ENCODE measurements at regions of chr2 and their contacts with region 1.

Region 1: DNA sequence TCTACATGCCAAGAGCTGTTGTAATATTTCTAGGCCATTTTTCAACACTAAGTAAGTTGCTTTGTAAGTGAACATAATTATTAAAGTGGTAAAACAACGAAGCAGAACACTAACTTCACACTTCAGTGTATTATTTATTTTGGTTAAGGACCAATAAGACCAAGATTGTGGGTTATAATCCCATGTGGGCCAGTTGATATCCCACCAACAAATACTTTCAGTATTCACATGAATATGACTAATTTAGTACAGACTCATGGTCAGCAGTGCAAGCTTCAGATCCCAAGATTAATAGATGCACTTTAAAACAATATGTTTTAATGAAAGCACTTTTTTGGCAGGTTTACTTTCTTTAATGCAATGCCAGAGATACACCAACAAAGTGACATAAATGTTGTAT is 154.3 kb downstream of the LCLAT1 start:
- DNase-seq: no peak
- ATAC-seq: no peak
- H3K4me3 ChIP-seq: no peak overlapping the region
- H3K27ac ChIP-seq: no peak overlapping the region
- H3K4me1 ChIP-seq: no peaks in the 10 kb centered on the region
- H3K27me3 ChIP-seq: no peaks in the 10 kb centered on the region
- CTCF ChIP-seq: no peak
- EP300 ChIP-seq: no peak
- POLR2A ChIP-seq: no peak
- RAD21 ChIP-seq: no peak

Region 2: DNA sequence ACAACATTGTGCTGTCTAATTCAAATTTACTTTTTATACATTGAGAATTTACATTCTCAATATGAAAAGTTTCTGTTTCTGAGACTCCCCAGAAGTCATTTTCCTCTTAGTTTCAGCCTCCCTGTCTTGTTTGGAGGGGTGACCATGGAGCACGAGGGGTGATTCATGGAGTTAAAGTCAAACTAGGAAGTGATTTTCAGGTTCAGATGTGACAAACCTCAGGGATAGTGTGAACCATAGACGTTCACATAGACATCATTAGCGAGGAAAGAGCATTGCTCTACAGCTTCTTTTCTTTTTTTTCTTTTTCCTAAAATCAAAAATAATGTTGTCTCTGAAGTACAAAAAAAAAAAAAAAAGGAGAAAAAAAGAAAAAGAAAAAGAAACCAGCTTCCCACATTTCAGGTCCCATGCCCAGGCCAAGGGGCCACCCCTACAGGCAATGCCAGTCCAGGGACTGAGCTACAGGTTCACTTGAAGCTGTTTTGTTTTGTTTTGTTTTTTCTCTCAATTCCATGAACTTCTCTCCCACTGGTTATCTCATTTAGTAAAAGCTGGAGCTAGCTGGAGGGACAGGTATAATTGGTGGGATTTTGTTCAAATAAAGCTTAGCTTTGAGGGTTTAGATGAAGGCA is 172.4 kb before region 1 on chr2:
- CTCF ChIA-PET with region 1: no interaction called
- POLR2A ChIA-PET with region 1: no interaction called
- RAD21 ChIA-PET with region 1: no interaction called
- SMC1A ChIA-PET with region 1: no interaction called
- in situ Hi-C with region 1: no loop called
- intact Hi-C with region 1: no loop called
- DNase-seq: no peak
- ATAC-seq: no peak
- H3K4me3 ChIP-seq: no peak overlapping the region
- H3K27ac ChIP-seq: no peak overlapping the region
- H3K4me1 ChIP-seq: no peaks in the 10 kb centered on the region
- H3K27me3 ChIP-seq: no peaks in the 10 kb centered on the region
- CTCF ChIP-seq: no peak
- EP300 ChIP-seq: no peak
- POLR2A ChIP-seq: no peak
- RAD21 ChIP-seq: no peak

Region 3: DNA sequence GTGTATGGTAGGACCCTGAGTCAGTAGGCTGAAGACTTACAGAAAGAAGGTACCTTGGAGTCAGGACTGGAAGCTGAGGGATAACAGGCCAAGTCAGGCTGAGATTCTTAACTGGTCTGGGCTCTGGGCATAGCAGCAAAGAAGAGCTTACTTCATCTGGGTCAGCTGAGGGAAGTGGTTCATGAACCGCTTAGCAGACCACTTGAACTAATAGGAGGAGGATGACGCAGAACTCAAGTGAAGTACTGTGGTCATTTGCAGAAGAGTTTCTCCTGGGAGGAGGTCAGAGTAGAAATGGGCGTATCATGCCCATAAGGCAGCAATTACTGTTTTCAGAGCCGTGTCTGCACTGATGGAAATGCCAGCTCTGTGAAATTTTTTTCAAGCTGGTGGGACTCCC is 10.2 kb after region 1 on chr2:
- CTCF ChIA-PET with region 1: no interaction called
- POLR2A ChIA-PET with region 1: no interaction called
- RAD21 ChIA-PET with region 1: interaction called, 4 read pairs
- SMC1A ChIA-PET with region 1: interaction called, 17 read pairs
- in situ Hi-C with region 1: no loop called
- intact Hi-C with region 1: no loop called
- DNase-seq: no peak
- ATAC-seq: no peak
- H3K4me3 ChIP-seq: no peak overlapping the region
- H3K27ac ChIP-seq: no peak overlapping the region
- H3K4me1 ChIP-seq: peaks cover 9% of the 10 kb centered on the region
- H3K27me3 ChIP-seq: no peaks in the 10 kb centered on the region
- CTCF ChIP-seq: no peak
- EP300 ChIP-seq: no peak
- POLR2A ChIP-seq: no peak
- RAD21 ChIP-seq: no peak

Region 4: DNA sequence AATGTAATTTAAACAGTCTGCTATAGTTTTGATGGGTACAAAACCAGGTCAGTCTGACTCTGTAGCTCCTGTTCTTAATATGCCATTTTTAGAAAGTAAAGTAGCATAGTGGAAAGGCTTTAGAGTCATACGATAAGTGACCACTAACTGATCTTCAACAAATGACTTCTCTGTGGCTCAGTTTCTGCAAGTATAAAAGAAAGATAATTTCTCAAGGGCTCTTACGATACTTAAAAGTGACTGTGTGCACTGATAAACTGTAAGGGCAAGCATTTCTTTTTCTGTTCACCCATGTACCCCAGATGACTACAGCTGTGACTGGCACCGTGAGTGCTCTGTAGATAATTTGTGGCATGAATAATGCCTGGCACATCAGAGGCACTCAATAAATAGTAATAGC is 24.3 kb after region 1 on chr2:
- CTCF ChIA-PET with region 1: no interaction called
- POLR2A ChIA-PET with region 1: interaction called, 3 read pairs
- RAD21 ChIA-PET with region 1: no interaction called
- SMC1A ChIA-PET with region 1: interaction called, 10 read pairs
- in situ Hi-C with region 1: no loop called
- intact Hi-C with region 1: no loop called
- DNase-seq: no peak
- ATAC-seq: peak; percentile 39
- H3K4me3 ChIP-seq: no peak overlapping the region
- H3K27ac ChIP-seq: peak overlapping the region; percentile 87
- H3K4me1 ChIP-seq: peaks cover 25% of the 10 kb centered on the region
- H3K27me3 ChIP-seq: no peaks in the 10 kb centered on the region
- CTCF ChIP-seq: no peak
- EP300 ChIP-seq: no peak
- POLR2A ChIP-seq: no peak
- RAD21 ChIP-seq: no peak

Region 5: DNA sequence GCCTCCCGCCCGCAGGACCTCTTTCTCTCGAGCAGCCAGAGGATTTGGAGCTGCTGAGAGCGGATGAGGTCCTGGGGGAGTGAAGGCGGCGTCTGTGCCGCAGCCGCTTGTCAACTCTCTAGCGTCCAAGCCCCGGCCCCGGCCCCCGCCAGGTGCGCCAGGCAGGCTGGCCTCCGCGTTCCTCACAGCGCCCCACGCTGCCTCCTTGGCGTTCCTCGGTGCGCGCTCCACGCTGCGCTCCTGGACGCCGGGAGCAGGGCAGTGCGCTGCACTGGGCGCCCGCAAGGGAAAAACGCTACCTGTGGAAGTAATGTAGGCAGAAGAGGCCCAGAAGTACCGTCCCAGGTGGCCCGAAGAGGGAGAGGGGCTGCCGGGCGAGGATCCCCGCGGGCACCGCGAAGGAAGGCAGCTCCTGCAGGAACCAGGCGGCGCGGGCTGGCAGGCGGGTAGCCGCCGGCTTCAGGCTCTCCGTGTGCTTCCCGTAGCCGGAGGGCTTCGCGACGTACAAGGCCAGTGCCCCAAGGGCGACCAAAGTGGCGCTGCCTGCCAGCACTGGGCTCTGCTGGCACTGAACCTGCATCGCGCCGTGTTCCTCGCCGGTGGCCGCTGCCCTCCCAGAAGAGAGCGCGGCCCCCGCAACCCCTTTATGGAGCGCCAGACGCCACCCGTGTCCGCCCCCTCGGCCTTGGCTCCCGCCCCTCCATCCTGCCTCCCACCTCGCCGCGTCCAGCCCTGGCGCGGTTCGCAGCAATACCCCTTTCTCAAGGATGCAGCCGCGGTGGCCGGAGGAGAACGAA is 979.1 kb after region 1 on chr2 and contains the start of gene SRD5A2:
- CTCF ChIA-PET with region 1: no interaction called
- POLR2A ChIA-PET with region 1: no interaction called
- RAD21 ChIA-PET with region 1: no interaction called
- SMC1A ChIA-PET with region 1: no interaction called
- in situ Hi-C with region 1: no loop called
- intact Hi-C with region 1: no loop called
- DNase-seq: no peak
- ATAC-seq: no peak
- H3K4me3 ChIP-seq: no peak within 1 kb of the TSS
- H3K27ac ChIP-seq: no peak within 1 kb of the TSS
- H3K4me1 ChIP-seq: no peaks in the 10 kb centered on the region
- H3K27me3 ChIP-seq: peaks cover 2 to 6% of the 10 kb centered on the region in 2 experiments; a peak in 2 of 4 replicates
- CTCF ChIP-seq: no peak
- EP300 ChIP-seq: no peak
- POLR2A ChIP-seq: no peak
- RAD21 ChIP-seq: no peak
- polyA plus RNA-seq, gene SRD5A2: not detected

Measured in GM12878 (cell line).